ENCODE measurements at regions of chr19 and their contacts with region 1.

Region 1: DNA sequence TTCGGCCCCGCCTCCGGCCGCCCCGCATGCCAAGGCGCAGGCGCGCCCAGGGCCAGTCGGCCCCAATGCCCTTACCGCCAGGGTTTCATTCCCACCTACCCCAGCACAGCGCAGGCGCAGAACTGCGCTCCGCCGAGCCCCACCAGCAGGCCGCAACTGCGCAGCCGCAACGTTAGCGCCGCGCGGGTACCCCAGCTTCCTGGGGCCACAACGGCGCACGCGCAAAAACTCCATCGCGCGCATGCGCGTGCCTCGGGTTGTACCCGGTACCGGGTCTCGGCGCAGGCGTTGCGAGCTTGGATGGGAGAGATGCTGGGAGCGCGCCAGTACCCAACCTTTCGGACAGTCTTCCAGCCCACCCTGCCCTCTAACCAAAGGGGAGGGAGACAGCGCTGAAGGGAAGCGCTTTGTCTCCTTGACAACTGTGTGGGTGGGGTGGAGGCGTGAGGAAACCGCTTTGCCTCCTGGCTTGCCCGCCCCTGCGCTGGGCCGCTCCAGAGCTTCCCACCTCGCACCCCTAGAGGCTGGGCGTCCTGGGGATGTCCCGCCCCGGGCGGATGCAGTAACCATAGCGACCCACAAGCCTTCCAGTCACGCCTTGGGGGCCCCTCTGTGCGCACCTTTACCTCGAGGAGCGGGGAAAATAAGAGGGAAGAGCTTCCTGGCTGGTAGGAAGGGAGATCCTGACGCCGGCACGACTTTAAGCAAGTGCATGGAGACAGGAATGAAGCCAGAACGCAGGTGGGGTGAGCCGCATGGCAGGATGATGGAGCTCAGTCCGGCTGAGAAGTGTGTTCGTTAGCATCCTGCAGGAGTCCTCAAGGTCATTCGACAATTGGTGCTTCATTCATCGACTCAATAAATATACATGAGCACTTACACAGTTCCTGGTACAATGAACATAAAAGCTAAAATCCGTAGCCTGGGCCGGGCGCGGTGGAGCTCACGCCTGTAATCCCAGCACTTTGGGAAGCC is 525 bp upstream of the MYPOP start:
- DNase-seq: peak; percentile 100

Region 2: DNA sequence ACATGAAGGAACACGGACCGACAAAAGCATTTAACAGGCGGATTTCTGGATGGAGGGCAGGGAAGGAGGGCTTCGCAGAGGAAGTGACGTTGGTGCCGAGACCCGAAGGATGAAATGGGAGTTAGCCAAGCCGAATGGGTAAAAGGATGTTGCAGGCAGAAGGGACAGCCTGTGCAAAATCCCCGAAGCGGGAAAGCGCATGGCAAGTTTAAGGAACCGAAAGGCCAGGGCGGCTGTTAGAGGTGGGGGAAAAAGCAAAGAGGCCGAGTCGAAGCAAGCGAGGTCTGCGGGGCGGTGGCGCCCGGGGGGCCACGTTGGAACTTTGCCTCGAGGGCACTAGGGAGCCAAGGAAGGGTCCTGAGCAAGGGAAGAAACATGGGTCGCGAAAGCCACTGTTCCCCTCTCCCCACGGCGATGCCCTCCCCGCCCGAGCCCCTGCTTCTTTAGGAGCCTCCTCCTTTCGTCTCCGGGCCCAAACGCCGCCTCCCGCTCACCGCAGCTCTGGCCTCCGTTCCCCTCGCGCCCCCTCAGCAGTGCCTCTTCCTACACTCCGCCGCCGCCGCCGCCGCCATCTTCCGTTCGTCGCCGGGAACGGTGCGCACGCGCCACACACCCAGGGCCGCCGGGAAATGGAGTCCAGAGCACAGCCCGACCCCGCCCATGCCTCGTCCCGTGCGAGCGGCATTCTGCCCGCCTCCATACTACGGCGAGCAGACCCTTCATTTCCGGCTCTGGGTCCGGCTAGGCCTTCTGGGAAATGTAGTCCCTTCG is 40.2 kb before region 1 on chr19 and contains the start of gene SYMPK:
- CTCF ChIA-PET with region 1: interaction called, 3 read pairs
- POLR2A ChIA-PET with region 1: interaction called, 10 read pairs
- DNase-seq: peak; percentile 99

Region 3: GRCh38 chr19:45886427-45887199 is 16.3 kb before region 1 on chr19:
- CTCF ChIA-PET with region 1: interaction called, 3 read pairs
- POLR2A ChIA-PET with region 1: interaction called, 34 read pairs
- DNase-seq: peak; percentile 87

Region 4: DNA sequence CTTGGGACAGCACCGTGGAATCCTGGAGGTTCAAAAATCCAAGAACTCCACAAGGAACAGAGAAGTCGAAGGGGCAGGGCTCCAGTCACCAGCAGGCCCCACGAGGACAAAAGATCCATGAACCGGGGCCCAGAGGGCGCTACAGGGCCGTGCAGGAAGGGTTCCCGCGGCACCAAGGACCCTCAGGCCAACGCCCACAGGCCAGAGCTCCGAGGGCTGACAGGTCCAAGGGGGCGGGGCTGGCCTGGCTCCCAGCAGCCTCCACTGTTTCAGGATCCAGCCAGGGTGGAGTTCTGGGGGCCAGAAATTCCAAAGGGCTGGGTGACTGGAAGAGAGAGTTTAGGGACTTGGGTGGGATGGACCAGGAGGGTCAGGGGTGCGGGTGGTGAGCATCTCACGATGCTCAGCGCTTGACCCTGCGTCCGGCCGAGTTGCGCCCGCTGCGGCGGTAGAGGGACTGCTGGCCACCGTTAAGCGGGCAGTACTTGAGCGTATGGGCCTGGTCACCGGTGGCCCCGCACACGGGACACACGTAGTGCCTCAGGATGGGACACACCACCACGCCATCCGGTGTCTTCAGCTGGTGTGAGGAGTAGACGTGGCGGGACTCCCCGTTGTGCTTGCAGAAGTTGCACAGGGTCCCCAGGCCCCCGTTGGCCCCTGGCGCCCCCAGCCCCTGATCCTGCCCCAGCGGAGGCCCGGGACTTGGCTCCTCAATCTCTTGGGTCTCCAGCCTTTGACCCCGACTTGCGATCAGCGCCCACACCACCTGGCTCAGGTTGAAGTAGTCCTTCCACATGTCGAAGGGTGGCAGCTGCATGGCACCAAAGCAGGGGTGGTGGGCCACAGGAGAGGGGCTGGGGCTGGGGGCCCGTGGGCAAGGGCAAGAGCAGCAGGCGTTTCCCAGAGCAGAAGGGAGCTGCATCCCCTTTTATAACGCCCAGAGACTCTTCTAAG is 11.2 kb after region 1 on chr19 and contains the start of gene NANOS2:
- CTCF ChIA-PET with region 1: interaction called, 12 read pairs
- POLR2A ChIA-PET with region 1: interaction called, 13 read pairs
- DNase-seq: peak; percentile 58

Region 5: GRCh38 chr19:45927565-45928261 is 24.8 kb after region 1 on chr19:
- CTCF ChIA-PET with region 1: no interaction called
- POLR2A ChIA-PET with region 1: interaction called, 12 read pairs
- DNase-seq: peak; percentile 95

Region 6: DNA sequence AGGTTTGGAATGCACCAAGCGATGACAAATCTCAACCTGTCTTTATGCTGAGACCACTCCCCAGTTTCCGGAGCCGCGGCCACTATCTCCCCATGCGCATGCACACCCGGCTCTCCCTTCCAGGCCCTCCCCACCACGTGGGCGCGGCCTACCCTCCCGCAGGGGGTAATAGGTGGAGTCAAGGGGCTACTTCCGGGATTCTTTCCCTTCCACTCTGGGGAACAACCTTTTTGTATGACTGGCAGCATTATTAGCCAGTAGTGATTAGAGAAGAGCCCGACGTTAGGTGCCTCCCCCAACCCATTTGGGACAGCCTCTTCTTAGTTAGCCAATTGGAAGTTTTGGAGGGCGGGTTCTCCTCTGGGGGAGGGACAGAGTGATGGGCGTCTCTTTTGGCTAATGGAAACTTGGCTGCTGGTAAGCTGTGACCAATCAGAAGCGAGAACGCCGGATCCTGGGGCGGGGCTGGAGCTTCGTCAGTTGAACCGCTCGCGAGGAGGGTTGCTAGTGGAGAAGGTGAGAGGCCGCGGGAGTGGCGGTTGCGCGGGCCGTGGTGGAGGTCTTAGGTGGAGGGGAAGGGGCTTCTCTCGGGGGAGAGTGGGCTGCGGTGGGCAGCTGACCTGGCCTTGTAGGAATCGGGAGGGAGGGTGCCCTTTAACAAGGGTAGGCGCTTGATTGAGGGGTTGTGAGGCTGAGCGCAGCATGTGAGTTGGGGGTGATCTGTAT is 92.2 kb after region 1 on chr19 and contains the start of gene CCDC61:
- CTCF ChIA-PET with region 1: no interaction called
- POLR2A ChIA-PET with region 1: interaction called, 13 read pairs
- DNase-seq: peak; percentile 98

Measured in HEK293T (cell line).